Left cardiac atrium (tissue), 4 donors: ENCODE measurements at regions of chr11 and their contacts with region 1.

Region 1: GRCh38 chr11:118145285-118146227 is 7.1 kb downstream of the SCN4B start:
- DNase-seq: peak; percentile 84
- ATAC-seq: peak; percentile 89 to 90

Region 2: GRCh38 chr11:118290923-118291322 is 145.4 kb after region 1 on chr11:
- intact Hi-C with region 1: loop called (anchors 1 to 5 kb)
- DNase-seq: no peak
- ATAC-seq: peak; percentile 80